ENCODE measurements at regions of chr7 and their contacts with region 1.

Region 1: DNA sequence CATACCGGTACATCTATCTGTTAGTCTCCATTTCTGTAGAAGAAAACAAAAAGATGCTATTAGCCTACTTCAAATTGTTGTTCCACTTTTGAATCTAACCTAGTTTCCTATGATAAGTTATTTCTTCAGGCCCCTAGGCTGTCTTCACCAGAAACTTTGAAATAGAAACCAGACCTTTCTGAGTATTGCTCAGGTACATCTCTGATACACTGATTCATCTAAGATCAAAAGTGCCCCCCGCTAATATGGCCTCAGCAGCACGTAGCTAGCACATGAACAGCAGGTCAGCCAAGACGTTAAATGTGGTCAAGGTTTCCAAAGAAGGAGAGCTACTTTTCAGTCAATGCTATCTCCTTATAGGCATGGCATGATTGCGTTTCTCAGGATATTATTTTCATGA is 23.6 kb downstream of the CTAGE6 start:
- DNase-seq: peak in 1 of 4 experiments; percentile 5
- ATAC-seq: no peak
- H3K4me3 ChIP-seq: no peak overlapping the region
- H3K27ac ChIP-seq: no peak overlapping the region
- H3K4me1 ChIP-seq: 0 out of 5 replicates have a peak, but pooled peaks cover 0 to 2% of the 10 kb centered on the region in 2 experiments
- H3K27me3 ChIP-seq: no peaks in the 10 kb centered on the region
- CTCF ChIP-seq: no peak
- EP300 ChIP-seq: no peak
- POLR2A ChIP-seq: no peak
- RAD21 ChIP-seq: no peak

Region 2: GRCh38 chr7:143287935-143288826 is 445.7 kb before region 1 on chr7 and contains the start of gene CASP2:
- CTCF ChIA-PET with region 1: no interaction called
- POLR2A ChIA-PET with region 1: no interaction called
- in situ Hi-C with region 1: no loop called
- intact Hi-C with region 1: no loop called
- DNase-seq: peak; percentile 100
- ATAC-seq: peak; percentile 94
- H3K4me3 ChIP-seq: peak within 1 kb of the TSS; percentile 87
- H3K27ac ChIP-seq: peak within 1 kb of the TSS; percentile 96
- H3K4me1 ChIP-seq: peaks cover 24 to 28% of the 10 kb centered on the region in 2 experiments; a peak in 4 of 5 replicates
- H3K27me3 ChIP-seq: no peaks in the 10 kb centered on the region
- CTCF ChIP-seq: peak; percentile 54 to 58 (median 55); a peak in 5 of 6 replicates
- EP300 ChIP-seq: no peak
- POLR2A ChIP-seq: peak; percentile 97
- RAD21 ChIP-seq: no peak; a peak in 1 of 4 replicates
- polyA plus RNA-seq, gene CASP2: 20.6 to 22.3 TPM

Region 3: GRCh38 chr7:143331179-143331820 is 402.6 kb before region 1 on chr7:
- CTCF ChIA-PET with region 1: no interaction called
- POLR2A ChIA-PET with region 1: no interaction called
- in situ Hi-C with region 1: no loop called
- intact Hi-C with region 1: no loop called
- DNase-seq: no peak
- ATAC-seq: no peak
- H3K4me3 ChIP-seq: no peak overlapping the region
- H3K27ac ChIP-seq: no peak overlapping the region
- H3K4me1 ChIP-seq: no peaks in the 10 kb centered on the region
- H3K27me3 ChIP-seq: peaks cover 39 to 71% of the 10 kb centered on the region in 2 experiments
- CTCF ChIP-seq: no peak
- EP300 ChIP-seq: no peak
- POLR2A ChIP-seq: no peak
- RAD21 ChIP-seq: no peak

Region 4: GRCh38 chr7:143490717-143491306 is 243.1 kb before region 1 on chr7:
- CTCF ChIA-PET with region 1: interaction called, 3 read pairs
- POLR2A ChIA-PET with region 1: no interaction called
- in situ Hi-C with region 1: no loop called
- intact Hi-C with region 1: loop called (anchors 1 kb)
- DNase-seq: peak; percentile 41 to 70 (median 60)
- ATAC-seq: peak; percentile 93
- H3K4me3 ChIP-seq: no peak overlapping the region
- H3K27ac ChIP-seq: no peak overlapping the region
- H3K4me1 ChIP-seq: peaks cover 7 to 18% of the 10 kb centered on the region in 2 experiments; a peak in 4 of 5 replicates
- H3K27me3 ChIP-seq: peaks cover 0 to 8% of the 10 kb centered on the region in 2 experiments; a peak in 1 of 5 replicates
- CTCF ChIP-seq: peak; percentile 85 to 93 (median 88)
- EP300 ChIP-seq: no peak
- POLR2A ChIP-seq: no peak
- RAD21 ChIP-seq: peak; percentile 81 to 90

Region 5: DNA sequence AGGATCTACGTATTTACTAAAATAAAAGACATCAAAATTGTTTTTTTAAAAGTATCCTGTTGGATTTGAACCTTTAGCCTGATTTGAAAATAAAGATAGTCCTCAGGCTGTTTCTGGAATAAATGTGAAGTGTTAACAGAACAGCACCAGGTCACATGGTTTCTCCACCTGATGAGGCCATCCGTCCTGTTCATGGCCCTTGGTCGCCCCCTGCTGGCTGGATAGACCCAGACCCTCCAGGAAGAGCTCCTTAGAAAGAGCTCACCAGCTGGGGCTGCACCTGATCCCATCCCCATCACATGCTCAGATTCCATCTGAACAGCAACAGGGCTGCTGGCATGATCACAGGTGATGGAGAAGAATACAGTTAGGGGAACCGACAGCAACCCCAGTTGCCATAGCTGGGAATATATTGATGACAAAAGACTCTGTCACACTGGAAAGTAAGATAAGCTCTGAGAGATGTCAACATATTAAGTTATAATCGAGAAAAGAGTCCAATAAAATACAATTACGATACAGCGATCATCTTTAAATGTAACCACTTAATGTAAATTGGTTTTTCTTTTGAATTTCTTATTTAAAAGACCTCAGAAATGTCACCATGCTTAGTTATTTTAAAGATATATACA is 393.9 kb after region 1 on chr7:
- CTCF ChIA-PET with region 1: interaction called, 26 read pairs
- POLR2A ChIA-PET with region 1: interaction called, 7 read pairs
- in situ Hi-C with region 1: no loop called
- intact Hi-C with region 1: loop called (anchors 5 kb)
- DNase-seq: peak; percentile 89 to 95 (median 94)
- ATAC-seq: peak; percentile 100
- H3K4me3 ChIP-seq: no peak overlapping the region
- H3K27ac ChIP-seq: no peak overlapping the region
- H3K4me1 ChIP-seq: no peaks in the 10 kb centered on the region
- H3K27me3 ChIP-seq: no peaks in the 10 kb centered on the region
- CTCF ChIP-seq: peak; percentile 91 to 97 (median 95)
- EP300 ChIP-seq: no peak
- POLR2A ChIP-seq: no peak
- RAD21 ChIP-seq: peak; percentile 94

Region 6: GRCh38 chr7:144133307-144133706 is 399.4 kb after region 1 on chr7:
- CTCF ChIA-PET with region 1: interaction called, 26 read pairs
- POLR2A ChIA-PET with region 1: interaction called, 7 read pairs
- in situ Hi-C with region 1: no loop called
- intact Hi-C with region 1: loop called (anchors 5 kb)
- DNase-seq: no peak
- ATAC-seq: no peak
- H3K4me3 ChIP-seq: no peak overlapping the region
- H3K27ac ChIP-seq: no peak overlapping the region
- H3K4me1 ChIP-seq: no peaks in the 10 kb centered on the region
- H3K27me3 ChIP-seq: no peaks in the 10 kb centered on the region
- CTCF ChIP-seq: no peak
- EP300 ChIP-seq: no peak
- POLR2A ChIP-seq: no peak
- RAD21 ChIP-seq: no peak

Region 7: DNA sequence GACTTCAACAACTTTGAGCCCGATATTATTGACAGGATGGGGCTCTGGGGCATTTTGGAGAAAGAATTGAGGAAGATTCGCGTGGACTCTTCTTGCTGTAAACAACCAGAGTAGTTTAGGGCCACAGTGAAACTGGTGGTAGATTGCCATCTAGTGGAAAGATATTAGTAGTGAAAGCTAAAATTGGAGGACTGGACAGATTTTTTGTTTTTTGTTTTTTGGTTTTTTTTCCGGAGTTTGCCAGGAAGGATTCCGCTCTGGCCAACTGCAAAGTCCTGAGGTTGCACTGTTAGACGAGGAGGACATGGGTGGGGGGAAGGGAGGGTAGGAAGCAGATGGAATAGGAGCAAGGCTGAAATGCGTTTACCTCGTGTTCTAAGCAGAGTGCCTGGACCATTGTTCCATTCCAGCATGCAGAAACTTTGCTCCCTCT is 658.0 kb after region 1 on chr7:
- CTCF ChIA-PET with region 1: no interaction called
- POLR2A ChIA-PET with region 1: no interaction called
- in situ Hi-C with region 1: no loop called
- intact Hi-C with region 1: loop called (anchors 5 kb)
- DNase-seq: peak; percentile 56 to 67 (median 61)
- ATAC-seq: peak; percentile 94
- H3K4me3 ChIP-seq: no peak overlapping the region
- H3K27ac ChIP-seq: no peak overlapping the region
- H3K4me1 ChIP-seq: no peaks in the 10 kb centered on the region
- H3K27me3 ChIP-seq: no peaks in the 10 kb centered on the region; a peak in 1 of 5 replicates
- CTCF ChIP-seq: peak; percentile 65 to 92 (median 73); a peak in 5 of 6 replicates
- EP300 ChIP-seq: no peak
- POLR2A ChIP-seq: no peak
- RAD21 ChIP-seq: peak; percentile 84 to 88

Measured in K562 (cell line).